AG04449 (cell line): ENCODE measurements at regions of chr3 and their contacts with region 1.

Region 1: GRCh38 chr3:123642182-123642956 is 57.5 kb upstream of the HACD2 start:
- DNase-seq: peak; percentile 56
- H3K4me3 ChIP-seq: no peak overlapping the region
- CTCF ChIP-seq: peak; percentile 67

Region 2: GRCh38 chr3:123618768-123619484 is 23.4 kb before region 1 on chr3:
- CTCF ChIA-PET with region 1: interaction called, 57 read pairs
- POLR2A ChIA-PET with region 1: no interaction called
- DNase-seq: peak; percentile 46
- H3K4me3 ChIP-seq: peak overlapping the region; percentile 57
- CTCF ChIP-seq: no peak

Region 3: GRCh38 chr3:123660900-123661299 is 18.5 kb after region 1 on chr3:
- CTCF ChIA-PET with region 1: interaction called, 201 read pairs
- POLR2A ChIA-PET with region 1: no interaction called
- DNase-seq: peak; percentile 98
- H3K4me3 ChIP-seq: no peak overlapping the region
- CTCF ChIP-seq: no peak

Region 4: GRCh38 chr3:123678108-123678511 is 35.7 kb after region 1 on chr3:
- CTCF ChIA-PET with region 1: interaction called, 17 read pairs
- POLR2A ChIA-PET with region 1: no interaction called
- DNase-seq: peak; percentile 81
- H3K4me3 ChIP-seq: no peak overlapping the region
- CTCF ChIP-seq: no peak

Region 5: DNA sequence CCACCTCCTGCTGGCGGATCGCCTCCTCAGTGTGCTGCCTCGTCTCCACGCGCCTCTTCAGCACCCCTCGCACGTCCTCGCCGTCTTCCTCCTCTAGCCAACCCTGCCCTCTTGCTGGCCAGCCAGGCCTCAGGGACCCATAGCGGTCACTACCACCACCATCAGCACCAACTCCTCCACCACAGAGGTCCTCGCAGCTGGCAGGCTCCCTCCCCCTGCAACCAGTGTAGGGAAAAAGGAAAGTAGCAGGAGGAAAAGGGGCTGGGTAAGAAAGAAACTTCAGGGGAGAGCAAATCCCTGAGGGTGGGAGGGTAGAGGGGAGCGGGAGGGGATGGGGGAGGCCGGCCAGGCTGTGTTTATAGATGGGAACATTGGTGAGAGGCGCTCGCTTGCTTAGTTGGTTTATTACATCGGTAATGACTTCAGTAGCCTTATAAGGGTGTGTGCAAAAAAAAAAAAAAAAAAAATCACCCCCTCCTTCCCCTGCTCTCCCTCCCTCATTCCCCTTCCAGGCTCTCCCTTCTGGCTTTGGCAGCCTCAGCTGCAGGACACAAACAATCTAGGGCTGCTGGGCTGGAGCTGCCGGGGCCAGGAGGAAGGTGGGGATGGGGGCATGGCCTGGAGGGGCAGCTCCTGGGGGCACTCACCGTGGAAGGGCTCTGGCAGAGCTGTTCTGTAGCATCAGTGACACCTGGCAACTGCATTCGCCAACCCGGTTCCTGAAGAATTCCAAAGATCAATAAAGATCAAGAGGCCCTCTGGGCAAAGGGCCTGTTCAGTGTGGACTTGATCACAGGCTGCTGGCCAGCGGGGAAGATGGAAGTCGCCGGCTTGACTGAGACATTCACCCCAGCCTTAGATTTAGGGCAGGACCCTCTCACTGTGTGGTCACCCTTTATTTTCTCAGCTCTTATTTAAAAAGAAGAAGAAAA is 58.7 kb after region 1 on chr3:
- CTCF ChIA-PET with region 1: interaction called, 436 read pairs
- POLR2A ChIA-PET with region 1: no interaction called
- DNase-seq: no peak
- H3K4me3 ChIP-seq: no peak overlapping the region
- CTCF ChIP-seq: no peak